Uterus (tissue), 4 donors: ENCODE measurements at regions of chr18 and their contacts with region 1.

Region 1: GRCh38 chr18:61893971-61894750 is 1.4 kb upstream of the RNF152 start:
- DNase-seq: peak; percentile 87 to 89
- H3K4me3 ChIP-seq: peak overlapping the region; percentile 83 to 100
- H3K27ac ChIP-seq: peak overlapping the region; percentile 96
- H3K4me1 ChIP-seq: peaks cover 3 to 5% of the 10 kb centered on the region in 2 donors
- H3K27me3 ChIP-seq: no peaks in the 10 kb centered on the region
- CTCF ChIP-seq: peak; percentile 36 to 76 (median 58)
- POLR2A ChIP-seq: peak; percentile 76

Region 2: GRCh38 chr18:61589713-61590065 is 304.5 kb before region 1 on chr18:
- intact Hi-C with region 1: no loop called
- DNase-seq: peak; percentile 42 to 50
- H3K4me3 ChIP-seq: no peak overlapping the region
- H3K27ac ChIP-seq: peak overlapping the region; percentile 42 to 75
- H3K4me1 ChIP-seq: no peaks in the 10 kb centered on the region
- H3K27me3 ChIP-seq: no peaks in the 10 kb centered on the region
- CTCF ChIP-seq: no peak
- POLR2A ChIP-seq: no peak

Region 3: DNA sequence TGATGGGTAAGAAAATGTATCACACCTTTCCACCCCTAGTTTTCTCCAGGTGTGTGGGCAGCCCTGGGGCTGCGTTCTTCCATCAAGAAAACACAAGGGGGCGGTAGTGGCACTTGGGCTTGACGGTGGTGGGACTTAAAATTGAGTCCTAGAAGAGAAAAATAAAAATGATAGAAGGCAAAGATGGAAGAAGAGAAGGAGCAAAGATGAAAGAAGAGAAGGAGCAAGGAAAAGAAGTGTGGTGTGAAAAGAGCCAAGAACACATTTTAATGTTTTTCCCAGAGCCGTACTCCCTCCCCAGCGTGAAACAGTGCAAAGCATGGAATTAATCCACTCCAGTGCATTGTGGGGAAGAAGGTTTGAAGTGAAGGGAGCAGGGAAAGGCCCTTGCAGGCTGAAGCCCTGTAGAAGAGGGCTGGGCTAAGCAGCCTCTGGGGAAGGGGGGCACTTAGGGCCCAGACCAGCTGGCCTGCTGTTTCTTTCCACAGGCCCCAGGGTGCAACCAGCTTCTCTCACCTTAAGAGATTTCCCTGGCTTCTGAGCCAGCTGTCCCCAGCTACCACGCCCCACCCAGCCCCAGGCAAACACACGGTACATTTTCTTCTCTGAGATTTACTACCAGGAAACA is 258.1 kb before region 1 on chr18:
- intact Hi-C with region 1: loop called (anchors 10 kb)
- DNase-seq: peak; percentile 61
- H3K4me3 ChIP-seq: no peak overlapping the region
- H3K27ac ChIP-seq: peak overlapping the region; percentile 28 to 56
- H3K4me1 ChIP-seq: no peaks in the 10 kb centered on the region
- H3K27me3 ChIP-seq: no peaks in the 10 kb centered on the region
- CTCF ChIP-seq: peak; percentile 61 to 87 (median 71)
- POLR2A ChIP-seq: no peak

Region 4: DNA sequence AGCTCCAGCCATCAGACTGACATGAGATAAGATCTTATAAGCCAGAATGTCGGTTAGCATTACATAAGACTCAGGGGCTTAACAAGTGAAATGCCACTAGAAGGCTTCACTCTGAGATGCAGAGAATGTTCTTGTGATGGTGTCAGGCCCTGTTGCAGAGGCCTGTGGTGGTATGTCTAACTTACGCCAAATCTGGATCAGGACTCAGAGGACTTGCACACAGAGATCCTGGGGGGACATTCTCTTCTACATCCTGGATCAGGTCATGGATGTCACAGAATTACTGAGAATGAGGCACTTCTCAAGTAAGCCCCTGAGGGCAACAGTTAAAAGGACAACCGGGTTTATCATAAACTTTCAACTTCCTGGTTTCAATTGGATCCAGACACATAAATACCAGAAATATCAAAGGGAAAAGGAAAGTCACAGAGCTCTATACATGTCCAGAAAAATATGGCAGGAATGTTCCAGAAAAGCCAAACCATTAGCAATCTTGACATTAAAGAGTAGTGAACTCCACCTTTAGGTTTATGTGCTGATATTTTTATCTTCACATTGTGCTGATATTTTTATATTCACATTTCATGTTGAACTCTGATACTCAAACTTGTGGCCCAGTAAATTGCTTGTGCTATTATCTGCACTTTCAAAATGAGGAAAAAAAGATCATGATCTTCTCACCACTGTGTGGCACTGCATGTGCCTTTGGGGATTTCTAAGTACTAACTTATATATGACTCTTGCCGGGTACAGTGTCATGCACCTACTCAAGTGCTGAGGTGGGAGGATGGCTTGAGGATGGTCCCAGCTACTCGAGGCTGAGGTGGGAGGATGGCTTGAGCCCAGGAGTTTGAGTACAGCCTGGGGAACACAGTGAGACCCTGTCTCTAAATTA is 136.2 kb after region 1 on chr18:
- intact Hi-C with region 1: loop called (anchors 10 kb)
- DNase-seq: no peak
- H3K4me3 ChIP-seq: no peak overlapping the region
- H3K27ac ChIP-seq: no peak overlapping the region
- H3K4me1 ChIP-seq: no peaks in the 10 kb centered on the region
- H3K27me3 ChIP-seq: no peaks in the 10 kb centered on the region
- CTCF ChIP-seq: no peak
- POLR2A ChIP-seq: no peak